Heart left ventricle (tissue), 16 donors: ENCODE measurements at regions of chr1 and their contacts with region 1.

Region 1: DNA sequence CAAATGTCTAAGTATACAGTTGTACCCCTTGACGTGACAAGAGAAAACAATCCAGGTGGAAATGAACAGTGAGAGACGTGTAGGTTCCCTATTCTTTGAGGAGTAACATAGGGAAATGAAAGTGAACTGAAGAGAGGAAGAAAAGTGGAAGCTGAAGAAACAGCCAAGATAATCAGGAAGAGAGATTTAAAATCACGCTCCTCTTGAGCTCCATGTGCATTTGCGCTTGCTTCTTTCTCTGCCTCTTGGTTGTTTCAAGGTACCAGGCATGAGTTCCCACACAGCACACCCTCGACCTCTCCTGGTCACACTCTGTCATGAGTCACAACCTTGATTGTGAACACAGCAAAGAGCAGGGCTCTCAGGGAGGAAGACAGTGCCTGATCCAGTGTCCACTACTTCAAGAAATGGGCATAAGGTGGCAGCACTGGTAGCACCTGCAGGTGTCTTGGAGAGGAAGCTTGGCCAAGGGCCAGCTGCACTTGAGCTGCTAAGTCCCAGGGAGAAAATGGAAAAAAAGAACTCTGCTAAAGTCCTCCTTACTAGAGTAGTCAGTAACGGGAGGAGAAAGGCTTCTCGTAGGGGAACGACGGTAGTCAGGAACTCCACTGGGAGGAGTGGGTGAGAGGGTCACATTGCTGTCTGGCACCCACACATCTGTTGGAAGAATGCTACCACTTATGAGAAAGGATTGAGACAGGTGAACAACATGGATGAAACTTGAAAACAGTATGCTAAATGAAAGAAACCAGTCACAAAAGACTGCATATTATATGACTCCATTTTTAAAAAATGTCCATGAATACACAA is 18.3 kb upstream of the ARID1A start:
- DNase-seq: peak; percentile 70 to 83 (median 78)
- ATAC-seq: peak; percentile 91 to 98 (median 97)
- H3K4me3 ChIP-seq: peak overlapping the region in 7 of 12 donors; percentile 5 to 37 (median 25)
- H3K27ac ChIP-seq: peak overlapping the region in 6 of 12 donors; percentile 1 to 69 (median 18)
- H3K4me1 ChIP-seq: peaks cover 0 to 20% (median 7%) of the 10 kb centered on the region in 12 donors
- H3K27me3 ChIP-seq: no peaks in the 10 kb centered on the region
- CTCF ChIP-seq: peak; percentile 43 to 76 (median 58)
- POLR2A ChIP-seq: no peak

Region 2: DNA sequence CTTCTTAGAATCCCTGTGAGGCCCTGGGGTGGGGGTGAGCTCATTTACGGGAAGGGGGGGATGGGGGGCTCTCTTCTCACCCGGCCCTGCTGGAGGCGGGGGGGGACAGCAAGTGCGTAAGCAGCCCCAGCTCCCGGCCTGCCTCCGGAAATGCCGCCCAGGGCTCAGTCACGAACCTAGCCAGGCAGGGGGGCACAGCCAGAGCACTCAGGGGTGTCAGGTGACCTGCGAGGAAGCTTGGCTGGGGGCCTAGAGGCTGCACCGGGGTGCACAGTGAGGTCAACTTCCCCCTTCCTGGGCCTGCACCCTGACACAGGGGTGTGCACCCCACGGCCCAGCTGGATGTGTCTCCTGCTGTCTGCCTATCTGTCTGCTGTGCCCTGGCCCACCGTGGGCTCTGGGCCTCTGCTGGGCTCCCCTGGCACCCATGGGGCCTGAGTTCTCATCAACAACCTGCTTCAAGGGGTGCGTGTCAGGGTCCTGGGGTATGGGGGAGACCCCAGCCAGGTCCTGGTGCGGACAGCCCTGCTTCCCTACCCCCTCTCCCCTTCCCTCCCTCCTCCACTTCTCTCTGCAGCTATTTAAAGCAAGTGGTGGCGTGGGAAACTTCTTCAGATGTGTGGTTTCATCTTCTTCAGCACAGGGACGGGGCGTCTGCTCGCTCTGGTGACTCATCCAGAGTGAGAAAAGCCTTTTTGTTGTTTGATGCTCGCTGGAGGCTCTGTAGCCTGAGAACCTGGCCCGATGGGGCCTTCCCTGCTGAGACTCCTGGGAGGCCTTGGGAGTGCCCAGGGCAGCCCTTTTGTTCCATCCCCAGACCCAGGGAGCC is 1654.9 kb before region 1 on chr1:
- intact Hi-C with region 1: no loop called
- DNase-seq: peak; percentile 47 to 84 (median 71)
- ATAC-seq: peak; percentile 41 to 83 (median 67)
- H3K4me3 ChIP-seq: peak overlapping the region in 1 of 12 donors; percentile 34
- H3K27ac ChIP-seq: peak overlapping the region in 5 of 12 donors; percentile 34 to 88 (median 36)
- H3K4me1 ChIP-seq: peaks cover 0 to 51% (median 8%) of the 10 kb centered on the region in 12 donors
- H3K27me3 ChIP-seq: peaks cover 0 to 6% (median 0%) of the 10 kb centered on the region in 9 donors
- CTCF ChIP-seq: no peak
- POLR2A ChIP-seq: no peak

Region 3: GRCh38 chr1:26602378-26602959 is 75.0 kb before region 1 on chr1:
- intact Hi-C with region 1: loop called in 6 of 10 experiments (anchors 2 to 5 kb)
- DNase-seq: peak in 2 of 5 donors; percentile 35 to 36
- ATAC-seq: peak in 2 of 4 donors; percentile 28 to 42
- H3K4me3 ChIP-seq: no peak overlapping the region
- H3K27ac ChIP-seq: no peak overlapping the region
- H3K4me1 ChIP-seq: peaks cover 0 to 23% (median 0%) of the 10 kb centered on the region in 12 donors
- H3K27me3 ChIP-seq: no peaks in the 10 kb centered on the region
- CTCF ChIP-seq: peak; percentile 79 to 95 (median 90)
- POLR2A ChIP-seq: no peak

Region 4: GRCh38 chr1:26608895-26609294 is 68.6 kb before region 1 on chr1:
- intact Hi-C with region 1: loop called in 3 of 10 experiments (anchors 5 kb)
- DNase-seq: no peak
- ATAC-seq: no peak
- H3K4me3 ChIP-seq: no peak overlapping the region
- H3K27ac ChIP-seq: no peak overlapping the region
- H3K4me1 ChIP-seq: no peaks in the 10 kb centered on the region
- H3K27me3 ChIP-seq: peaks cover 0 to 8% (median 0%) of the 10 kb centered on the region in 9 donors
- CTCF ChIP-seq: no peak
- POLR2A ChIP-seq: no peak